PC-9 (cell line): ENCODE measurements at regions of chr6 and their contacts with region 1.

Region 1: DNA sequence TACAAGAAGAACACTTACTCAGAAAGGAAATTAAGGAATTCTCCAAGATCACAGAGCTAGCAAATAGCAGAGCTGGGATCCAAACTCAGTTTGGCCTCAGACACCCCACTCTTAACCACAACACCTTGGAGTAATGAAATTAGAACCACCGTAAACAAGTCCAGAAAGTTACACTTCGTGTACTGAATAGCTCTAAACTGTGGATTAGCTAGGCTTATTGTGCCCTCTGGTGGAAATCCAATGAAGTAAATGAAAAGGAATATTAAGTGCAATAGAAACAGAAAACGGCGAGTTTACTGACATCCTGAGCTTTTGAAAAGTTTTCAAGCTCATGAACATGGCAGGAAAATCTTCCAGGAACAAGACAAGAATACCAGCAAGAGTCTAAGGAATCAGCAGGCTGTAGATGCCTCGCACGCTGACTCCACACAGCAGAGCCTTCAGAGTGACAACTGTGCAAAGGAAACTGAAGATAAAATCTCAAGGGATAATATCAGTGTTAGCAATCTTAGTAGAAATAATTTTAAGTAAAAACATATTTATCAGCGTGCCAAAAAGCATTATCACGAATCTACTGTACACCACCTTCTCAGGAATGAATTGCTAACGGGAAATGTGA is 34.6 kb downstream of the FBXO5 start:
- DNase-seq: no peak
- H3K4me3 ChIP-seq: no peak overlapping the region
- H3K27ac ChIP-seq: no peak overlapping the region
- H3K4me1 ChIP-seq: peaks cover 26% of the 10 kb centered on the region
- H3K27me3 ChIP-seq: no peaks in the 10 kb centered on the region
- CTCF ChIP-seq: peak; percentile 82

Region 2: GRCh38 chr6:152484806-152485205 is 463.5 kb before region 1 on chr6:
- CTCF ChIA-PET with region 1: no interaction called
- POLR2A ChIA-PET with region 1: no interaction called
- intact Hi-C with region 1: loop called (anchors 10 kb)
- DNase-seq: no peak
- H3K4me3 ChIP-seq: no peak overlapping the region
- H3K27ac ChIP-seq: no peak overlapping the region
- H3K4me1 ChIP-seq: no peaks in the 10 kb centered on the region
- H3K27me3 ChIP-seq: no peaks in the 10 kb centered on the region
- CTCF ChIP-seq: no peak

Region 3: GRCh38 chr6:152748843-152749242 is 199.4 kb before region 1 on chr6:
- CTCF ChIA-PET with region 1: interaction called, 6 read pairs
- POLR2A ChIA-PET with region 1: no interaction called
- intact Hi-C with region 1: loop called (anchors 2 kb)
- DNase-seq: no peak
- H3K4me3 ChIP-seq: no peak overlapping the region
- H3K27ac ChIP-seq: no peak overlapping the region
- H3K4me1 ChIP-seq: 0 out of 2 replicates have a peak, but pooled peaks cover 6% of the 10 kb centered on the region
- H3K27me3 ChIP-seq: no peaks in the 10 kb centered on the region
- CTCF ChIP-seq: peak; percentile 41; the same call in 1 of the 2 replicates

Region 4: GRCh38 chr6:152879681-152880080 is 68.6 kb before region 1 on chr6:
- CTCF ChIA-PET with region 1: interaction called, 12 read pairs
- POLR2A ChIA-PET with region 1: no interaction called
- intact Hi-C with region 1: no loop called
- DNase-seq: peak in 1 of 2 experiments; percentile 71
- H3K4me3 ChIP-seq: no peak overlapping the region
- H3K27ac ChIP-seq: peak overlapping the region; percentile 31; the same call in 1 of the 2 replicates
- H3K4me1 ChIP-seq: peaks cover 8% of the 10 kb centered on the region; the same call in 1 of the 2 replicates
- H3K27me3 ChIP-seq: no peaks in the 10 kb centered on the region
- CTCF ChIP-seq: no peak